Activated T-helper 2 cell treated with anti-CD3 and anti-CD28 coated beads, Interferon-gamma antibody, Interleukin-2, Interleukin-4, amounts not matched to agents 10 μg/mL and 5 μg/mL and 100 μg/mL, durations not matched to agents 14 hours and 24 hours and 36 hours (primary cell): ENCODE measurements at regions of chr20 and their contacts with region 1.

Region 1: GRCh38 chr20:38434743-38435554 is at the start of gene SNHG17:
- DNase-seq: peak; percentile 86
- H3K4me3 Mint-ChIP-seq: peak within 1 kb of the TSS; percentile 90
- H3K27ac Mint-ChIP-seq: peak within 1 kb of the TSS; percentile 93
- H3K4me1 Mint-ChIP-seq: peaks cover 24% of the 10 kb centered on the region
- H3K27me3 Mint-ChIP-seq: peaks cover 2% of the 10 kb centered on the region
- total RNA-seq, gene SNHG17: 78.7 and 83.7 TPM in 2 replicates

Region 2: DNA sequence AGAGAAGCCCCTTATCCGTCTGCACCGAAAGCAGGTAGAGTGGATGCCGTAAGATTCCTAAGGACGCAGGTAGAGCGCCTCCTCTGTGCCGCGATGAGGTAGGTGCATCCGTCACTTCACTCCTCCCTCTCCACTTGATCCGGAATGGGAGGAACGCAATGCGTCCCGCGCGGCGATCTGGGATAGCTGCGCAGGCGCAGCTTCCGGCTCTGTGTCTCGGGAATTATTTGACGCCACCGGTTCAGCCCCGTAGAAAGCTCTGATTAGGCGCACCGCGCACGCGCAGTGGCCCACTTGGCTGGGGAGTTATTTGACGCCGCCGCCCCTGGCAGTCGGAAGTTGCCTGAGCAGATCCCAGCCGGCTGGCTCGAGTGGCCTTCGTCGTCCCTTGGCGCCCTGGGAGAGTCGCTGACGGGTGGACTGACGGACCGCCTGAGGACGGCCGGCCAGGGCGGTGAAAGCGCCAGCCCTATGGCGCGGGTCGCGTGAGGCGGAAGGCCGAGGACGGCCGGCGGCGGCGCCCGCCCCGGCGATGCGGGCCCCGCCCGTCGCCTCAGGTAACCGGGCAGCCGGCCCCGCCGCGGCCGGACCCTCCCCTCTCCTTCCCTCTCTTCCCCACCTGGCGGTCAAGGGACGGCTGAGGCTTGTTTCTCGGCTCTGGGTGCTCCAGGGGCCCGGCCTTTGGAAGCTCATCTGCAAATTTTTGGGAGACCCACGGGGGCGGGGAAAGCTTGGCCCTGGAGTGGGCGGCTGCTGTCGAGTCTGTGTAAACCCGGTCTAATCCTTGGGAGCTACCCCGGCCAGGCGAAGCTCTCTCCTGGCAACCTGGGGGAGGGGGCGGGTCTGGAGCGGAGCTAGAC is 37.8 kb after region 1 on chr20 and contains the start of gene RALGAPB:
- intact Hi-C with region 1: loop called (anchors 1 kb)
- DNase-seq: peak; percentile 98
- H3K4me3 Mint-ChIP-seq: peak within 1 kb of the TSS; percentile 84
- H3K27ac Mint-ChIP-seq: peak within 1 kb of the TSS; percentile 67
- H3K4me1 Mint-ChIP-seq: peaks cover 24% of the 10 kb centered on the region
- H3K27me3 Mint-ChIP-seq: peaks cover 5% of the 10 kb centered on the region
- total RNA-seq, gene RALGAPB: 30.0 and 33.1 TPM in 2 replicates